Mucosa of descending colon (tissue), 3 donors: ENCODE measurements at regions of chr22 and their contacts with region 1.

Region 1: GRCh38 chr22:46122511-46122971 is 27.8 kb upstream of the PPARA start:
- DNase-seq: peak in 2 of 3 donors; percentile 84 to 87
- ATAC-seq: peak; percentile 46
- H3K4me3 ChIP-seq: no peak overlapping the region
- H3K4me1 ChIP-seq: peaks cover 12% of the 10 kb centered on the region
- CTCF ChIP-seq: peak; percentile 91

Region 2: GRCh38 chr22:46267431-46268279 is 145.1 kb after region 1 on chr22 and contains the start of gene TTC38:
- intact Hi-C with region 1: no loop called
- DNase-seq: peak; percentile 94 to 95 (median 95)
- ATAC-seq: peak; percentile 94
- H3K4me3 ChIP-seq: peak within 1 kb of the TSS; percentile 60
- H3K4me1 ChIP-seq: peaks cover 16% of the 10 kb centered on the region
- CTCF ChIP-seq: no peak
- total RNA-seq, gene TTC38: 70.2 to 157 (median 90.7) TPM

Region 3: GRCh38 chr22:46309526-46310085 is 187.1 kb after region 1 on chr22:
- intact Hi-C with region 1: loop called (anchors 5 kb)
- DNase-seq: no peak
- ATAC-seq: no peak
- H3K4me3 ChIP-seq: no peak overlapping the region
- H3K4me1 ChIP-seq: no peaks in the 10 kb centered on the region
- CTCF ChIP-seq: no peak